ENCODE measurements at regions of chr1 and their contacts with region 1.

Region 1: DNA sequence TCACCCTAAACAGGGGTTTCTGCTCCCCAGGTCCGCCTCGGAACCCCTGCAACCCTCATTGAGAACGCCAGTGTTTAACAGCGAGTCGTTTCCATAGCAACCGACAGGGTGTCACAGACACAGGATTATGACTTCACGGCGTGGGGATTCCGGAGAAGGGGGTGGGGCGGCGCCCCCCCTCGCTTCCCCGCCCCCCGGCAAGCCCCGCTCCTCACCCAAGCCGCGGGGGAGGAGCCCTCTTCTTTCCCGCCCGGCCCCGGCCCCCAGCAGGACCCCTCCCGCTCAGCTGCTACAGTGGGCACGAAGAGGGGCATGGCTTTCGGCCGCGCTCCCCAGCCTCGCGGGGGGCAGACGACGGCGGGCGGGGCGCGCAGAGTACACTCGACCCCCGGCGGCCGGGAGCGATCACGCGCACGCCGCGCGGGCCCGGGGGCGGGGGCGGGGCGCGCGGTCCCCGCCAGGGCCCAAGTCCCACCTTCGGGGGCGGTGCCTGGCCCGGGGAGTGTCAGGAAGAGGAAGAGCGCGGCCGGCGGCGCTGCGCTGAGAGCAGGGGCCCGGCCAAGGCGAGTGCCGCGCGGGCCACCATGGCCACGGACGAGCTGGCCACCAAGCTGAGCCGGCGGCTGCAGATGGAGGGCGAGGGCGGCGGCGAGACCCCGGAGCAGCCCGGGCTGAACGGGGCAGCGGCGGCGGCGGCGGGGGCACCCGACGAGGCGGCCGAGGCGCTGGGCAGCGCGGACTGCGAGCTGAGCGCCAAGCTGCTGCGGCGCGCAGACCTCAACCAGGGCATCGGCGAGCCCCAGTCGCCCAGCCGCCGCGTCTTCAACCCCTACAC is at the start of gene EFHD2:
- DNase-seq: peak; percentile 87 to 92 (median 88)
- ATAC-seq: peak; percentile 79 to 93 (median 89)
- H3K4me3 ChIP-seq: peak within 1 kb of the TSS; percentile 66 to 98 (median 89)
- H3K27ac ChIP-seq: peak within 1 kb of the TSS in 11 of 12 donors; percentile 49 to 90 (median 74)
- H3K4me1 ChIP-seq: peaks cover 0 to 62% (median 31%) of the 10 kb centered on the region in 12 donors
- H3K27me3 ChIP-seq: no peaks in the 10 kb centered on the region
- CTCF ChIP-seq: peak in 1 of 12 donors; percentile 4
- POLR2A ChIP-seq: peak; percentile 52 to 92
- total RNA-seq, gene EFHD2: 11.2 to 52.2 (median 15.8) TPM

Region 2: GRCh38 chr1:15141935-15142539 is 267.6 kb before region 1 on chr1:
- intact Hi-C with region 1: loop called in 1 of 10 experiments (anchors 10 kb)
- DNase-seq: peak in 4 of 5 donors; percentile 30 to 85 (median 54)
- ATAC-seq: peak; percentile 68 to 92 (median 86)
- H3K4me3 ChIP-seq: no peak overlapping the region
- H3K27ac ChIP-seq: peak overlapping the region in 1 of 12 donors; percentile 63
- H3K4me1 ChIP-seq: peaks cover 0 to 18% (median 0%) of the 10 kb centered on the region in 12 donors
- H3K27me3 ChIP-seq: peaks cover 0 to under 1% (median 0%) of the 10 kb centered on the region in 9 donors
- CTCF ChIP-seq: peak in 1 of 12 donors; percentile 9
- POLR2A ChIP-seq: no peak

Region 3: DNA sequence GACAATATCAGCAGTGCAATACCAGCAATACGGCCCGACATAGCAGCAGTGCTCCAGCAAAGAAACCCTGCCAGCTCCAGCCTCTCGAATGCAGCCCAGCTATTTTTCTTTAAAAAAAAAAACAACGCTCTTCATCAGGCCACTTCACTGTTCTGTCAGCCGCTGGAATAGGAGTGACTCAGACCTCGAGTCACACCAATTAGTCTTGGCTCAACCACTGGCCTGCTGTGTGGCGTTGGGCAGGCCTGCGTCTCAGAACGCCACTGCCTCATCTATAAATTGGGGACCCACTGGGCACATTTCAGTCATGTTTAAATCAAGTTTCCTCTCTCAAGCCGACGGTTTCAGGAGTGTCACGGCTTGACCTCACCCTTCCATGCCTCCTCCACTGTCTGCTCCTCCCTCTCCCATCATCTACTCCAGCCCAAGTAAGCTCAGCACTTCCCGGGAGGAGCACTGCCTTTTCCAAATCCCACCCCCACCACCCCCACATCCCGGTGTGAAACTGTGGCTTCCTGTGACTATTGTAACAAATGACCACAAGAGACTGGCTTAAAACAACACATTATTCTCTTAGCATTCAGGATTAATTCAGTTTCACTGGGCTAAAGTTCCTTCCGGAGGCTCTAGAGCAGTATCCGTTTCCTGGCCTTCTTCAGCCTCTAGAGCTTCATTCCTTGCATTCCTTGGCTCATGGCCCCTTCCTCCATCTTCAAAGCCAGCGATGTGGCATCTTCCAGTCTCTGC is 71.8 kb before region 1 on chr1:
- intact Hi-C with region 1: loop called in 4 of 10 experiments (anchors 5 kb)
- DNase-seq: peak in 2 of 5 donors; percentile 46 to 55
- ATAC-seq: peak; percentile 78 to 88 (median 84)
- H3K4me3 ChIP-seq: no peak overlapping the region
- H3K27ac ChIP-seq: peak overlapping the region; percentile 28 to 88 (median 76)
- H3K4me1 ChIP-seq: peaks cover 0 to 40% (median 14%) of the 10 kb centered on the region in 12 donors
- H3K27me3 ChIP-seq: no peaks in the 10 kb centered on the region
- CTCF ChIP-seq: no peak
- POLR2A ChIP-seq: no peak

Region 4: GRCh38 chr1:15393475-15394257 is 15.9 kb before region 1 on chr1:
- intact Hi-C with region 1: no loop called
- DNase-seq: no peak
- ATAC-seq: no peak
- H3K4me3 ChIP-seq: no peak overlapping the region
- H3K27ac ChIP-seq: no peak overlapping the region
- H3K4me1 ChIP-seq: no peaks in the 10 kb centered on the region
- H3K27me3 ChIP-seq: no peaks in the 10 kb centered on the region
- CTCF ChIP-seq: no peak
- POLR2A ChIP-seq: no peak

Measured in heart left ventricle (tissue), 16 donors.